BJ (cell line): ENCODE measurements at regions of chr6 and their contacts with region 1.

Region 1: DNA sequence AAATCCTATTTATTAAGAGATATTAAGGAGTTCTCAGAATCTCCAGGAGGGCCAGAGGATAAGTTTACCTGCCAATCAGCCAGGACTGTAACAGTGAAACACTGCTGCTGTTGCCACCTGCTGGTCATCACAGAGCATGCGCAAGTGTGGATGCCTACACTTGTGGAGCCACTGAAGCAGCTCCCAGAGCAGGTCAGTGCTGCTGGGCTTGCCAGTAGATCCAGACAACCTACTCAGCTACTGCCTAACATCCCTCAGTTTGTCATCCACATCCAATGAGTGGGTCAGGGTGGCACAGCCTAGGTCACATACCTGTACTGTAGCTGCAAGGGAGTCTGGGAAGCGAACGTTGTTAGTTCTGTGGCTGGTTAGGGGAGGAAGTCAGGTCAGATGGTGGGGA is 18.3 kb upstream of the NHSL1 start:
- DNase-seq: no peak
- H3K4me3 ChIP-seq: no peak overlapping the region
- H3K27me3 ChIP-seq: no peaks in the 10 kb centered on the region
- CTCF ChIP-seq: peak; percentile 79

Region 2: DNA sequence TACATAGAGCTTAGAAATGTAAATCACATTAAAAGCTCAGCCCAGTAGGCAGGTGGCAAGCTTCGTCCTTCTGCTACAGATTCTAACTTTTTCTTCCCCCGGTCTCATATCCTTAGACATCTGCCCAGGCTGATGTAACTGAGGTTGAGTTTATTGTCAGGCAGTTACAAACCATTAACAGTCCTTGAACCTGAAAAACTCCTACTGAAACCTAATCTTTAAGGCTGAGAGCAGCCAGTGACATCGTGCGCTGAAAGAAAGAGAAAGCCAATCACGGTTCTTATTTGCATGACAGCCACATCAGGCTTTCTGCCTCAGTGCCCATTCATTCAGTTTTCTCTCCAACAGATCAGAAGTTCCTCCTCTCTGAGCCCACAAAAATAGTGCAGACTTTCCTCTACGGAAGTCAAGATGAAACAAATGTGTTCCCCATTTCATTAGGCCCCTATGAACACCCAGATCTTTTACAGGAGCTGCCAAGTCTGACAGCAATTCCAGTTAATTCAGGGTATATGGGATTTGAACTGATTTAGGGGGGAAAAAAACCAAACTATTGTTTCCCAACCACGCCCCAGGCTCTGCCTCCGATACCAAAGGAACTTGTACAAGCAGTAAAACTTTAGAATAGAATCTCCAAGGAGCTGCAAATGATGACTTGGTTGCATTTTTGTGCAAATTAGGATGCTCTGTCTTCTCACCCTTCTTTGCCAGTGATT is 18.2 kb before region 1 on chr6 and contains the start of gene NHSL1:
- CTCF ChIA-PET with region 1: interaction called, 17 read pairs
- POLR2A ChIA-PET with region 1: no interaction called
- DNase-seq: no peak
- H3K4me3 ChIP-seq: no peak within 1 kb of the TSS
- H3K27me3 ChIP-seq: no peaks in the 10 kb centered on the region
- CTCF ChIP-seq: no peak
- polyA plus RNA-seq, gene NHSL1: 3.3 and 3.6 TPM in 2 replicates

Region 3: DNA sequence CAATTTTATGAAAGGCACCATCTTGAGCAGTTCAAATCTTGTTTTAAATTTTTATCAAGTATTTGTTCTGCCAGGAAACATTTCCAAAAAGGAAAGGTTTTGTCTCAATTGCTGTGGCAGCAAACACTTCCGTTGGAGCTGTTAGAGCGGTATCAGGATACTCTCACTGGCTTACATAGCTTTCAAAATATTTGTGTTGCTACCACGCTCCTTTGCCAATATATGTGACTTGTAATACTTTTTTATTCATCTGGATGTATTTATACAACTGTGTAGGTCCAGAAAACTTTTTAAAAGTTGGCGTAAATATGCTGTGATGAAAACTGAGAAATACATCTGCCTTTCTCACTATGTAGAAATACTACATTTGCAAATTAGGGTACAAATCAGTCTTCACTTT is 19.5 kb after region 1 on chr6:
- CTCF ChIA-PET with region 1: interaction called, 13 read pairs
- POLR2A ChIA-PET with region 1: no interaction called
- DNase-seq: no peak
- H3K4me3 ChIP-seq: no peak overlapping the region
- H3K27me3 ChIP-seq: no peaks in the 10 kb centered on the region
- CTCF ChIP-seq: no peak